ENCODE measurements at regions of chr5 and their contacts with region 1.

Region 1: GRCh38 chr5:178153573-178154343 is at the start of gene NHP2:
- DNase-seq: peak; percentile 95
- ATAC-seq: peak; percentile 99
- H3K4me3 Mint-ChIP-seq: peak within 1 kb of the TSS; percentile 96
- H3K27ac Mint-ChIP-seq: peak within 1 kb of the TSS; percentile 83
- H3K4me1 Mint-ChIP-seq: peaks cover 37% of the 10 kb centered on the region
- H3K27me3 Mint-ChIP-seq: no peaks in the 10 kb centered on the region
- CTCF ChIP-seq: no peak
- total RNA-seq, gene NHP2: 175 and 180 TPM in 2 replicates

Region 2: DNA sequence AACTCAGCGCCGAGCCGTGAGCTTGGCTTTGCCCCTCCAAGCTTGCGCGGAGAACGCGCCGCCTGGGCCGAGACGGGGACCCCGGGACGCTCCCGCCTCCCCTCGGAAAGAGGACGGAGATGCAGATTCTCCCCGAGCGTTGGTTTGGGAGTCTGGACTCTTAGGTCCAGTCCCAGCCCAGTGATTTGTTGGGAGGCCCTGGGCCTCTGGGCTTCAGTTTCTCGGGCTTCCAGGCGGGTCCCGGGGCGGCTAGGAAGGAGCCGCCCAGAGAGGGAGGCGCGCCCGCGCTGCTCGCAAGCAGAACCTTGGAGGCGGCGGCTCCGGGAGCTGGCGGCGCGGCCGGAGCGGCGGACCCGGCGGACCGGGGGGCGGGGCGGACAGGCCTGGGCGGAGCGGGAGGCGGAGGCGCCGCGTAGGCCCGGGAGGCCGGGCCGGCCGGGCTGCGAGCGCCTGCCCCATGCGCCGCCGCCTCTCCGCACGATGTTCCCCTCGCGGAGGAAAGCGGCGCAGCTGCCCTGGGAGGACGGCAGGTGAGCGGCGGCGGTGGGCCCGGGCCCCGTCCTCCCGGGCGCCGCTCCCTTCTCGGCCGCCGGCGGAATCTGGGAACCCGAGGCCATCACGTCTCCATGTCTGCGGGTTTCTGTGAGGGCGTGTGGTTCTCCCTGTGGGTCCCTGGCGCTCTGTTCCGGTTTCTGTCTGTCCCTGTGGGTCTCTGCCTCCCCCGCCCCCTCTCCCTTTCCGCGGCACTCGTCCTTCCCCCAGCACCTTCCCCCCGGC is 553.8 kb before region 1 on chr5 and contains the start of gene B4GALT7:
- CTCF ChIA-PET with region 1: no interaction called
- POLR2A ChIA-PET with region 1: no interaction called
- intact Hi-C with region 1: loop called (anchors 10 kb)
- DNase-seq: peak; percentile 75
- ATAC-seq: peak; percentile 89
- H3K4me3 Mint-ChIP-seq: peak within 1 kb of the TSS; percentile 91
- H3K27ac Mint-ChIP-seq: peak within 1 kb of the TSS; percentile 93
- H3K4me1 Mint-ChIP-seq: peaks cover 28% of the 10 kb centered on the region
- H3K27me3 Mint-ChIP-seq: no peaks in the 10 kb centered on the region
- CTCF ChIP-seq: no peak
- total RNA-seq, gene B4GALT7: 36.3 and 42.3 TPM in 2 replicates

Region 3: GRCh38 chr5:177958696-177959095 is 195.1 kb before region 1 on chr5:
- CTCF ChIA-PET with region 1: no interaction called
- POLR2A ChIA-PET with region 1: no interaction called
- intact Hi-C with region 1: no loop called
- DNase-seq: no peak
- ATAC-seq: no peak
- H3K4me3 Mint-ChIP-seq: no peak overlapping the region
- H3K27ac Mint-ChIP-seq: no peak overlapping the region
- H3K4me1 Mint-ChIP-seq: no peaks in the 10 kb centered on the region
- H3K27me3 Mint-ChIP-seq: no peaks in the 10 kb centered on the region
- CTCF ChIP-seq: no peak

Region 4: DNA sequence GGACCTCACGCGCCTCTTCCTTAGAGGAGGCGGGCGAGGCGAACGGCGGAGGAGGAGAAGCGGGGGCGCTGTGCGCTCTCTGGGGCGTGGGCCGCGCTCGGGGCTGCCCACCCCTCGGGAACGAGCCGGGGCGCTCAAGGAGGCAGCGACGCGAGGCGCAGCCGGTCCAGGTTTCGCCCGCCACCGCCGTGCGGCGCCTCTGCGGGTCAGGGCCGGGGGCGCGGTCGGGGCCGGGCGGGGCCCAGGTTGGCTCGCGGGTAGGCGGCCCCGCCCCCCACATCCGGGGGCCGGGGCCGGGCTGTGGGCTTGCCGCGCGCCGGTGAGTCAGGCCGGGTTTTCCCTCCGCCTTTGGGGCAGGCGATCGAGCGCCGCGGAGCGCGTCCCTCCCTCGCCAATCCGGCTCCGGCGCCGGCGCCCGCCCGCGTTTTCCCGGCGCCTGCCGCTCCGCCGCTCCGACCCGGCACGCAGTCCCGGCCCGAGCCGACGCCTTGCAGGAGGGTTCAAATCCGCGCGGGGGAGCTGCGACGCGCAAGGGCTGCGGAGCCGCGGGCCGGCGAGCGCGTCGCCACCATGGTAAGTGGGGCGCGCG is 40.5 kb before region 1 on chr5 and contains the start of gene N4BP3:
- CTCF ChIA-PET with region 1: no interaction called
- POLR2A ChIA-PET with region 1: interaction called, 10 read pairs
- intact Hi-C with region 1: loop called (anchors 1 kb)
- DNase-seq: peak; percentile 92
- ATAC-seq: peak; percentile 70
- H3K4me3 Mint-ChIP-seq: peak within 1 kb of the TSS; percentile 98
- H3K27ac Mint-ChIP-seq: peak within 1 kb of the TSS; percentile 94
- H3K4me1 Mint-ChIP-seq: peaks cover 65% of the 10 kb centered on the region
- H3K27me3 Mint-ChIP-seq: no peaks in the 10 kb centered on the region
- CTCF ChIP-seq: no peak
- total RNA-seq, gene N4BP3: 17.4 and 18.1 TPM in 2 replicates

Region 5: GRCh38 chr5:178130604-178131485 is 22.9 kb before region 1 on chr5 and contains the start of gene RMND5B:
- CTCF ChIA-PET with region 1: no interaction called
- POLR2A ChIA-PET with region 1: interaction called, 10 read pairs
- intact Hi-C with region 1: loop called (anchors 1 kb)
- DNase-seq: peak; percentile 86
- ATAC-seq: peak; percentile 89
- H3K4me3 Mint-ChIP-seq: peak within 1 kb of the TSS; percentile 85
- H3K27ac Mint-ChIP-seq: peak within 1 kb of the TSS; percentile 74
- H3K4me1 Mint-ChIP-seq: peaks cover 21% of the 10 kb centered on the region
- H3K27me3 Mint-ChIP-seq: no peaks in the 10 kb centered on the region
- CTCF ChIP-seq: no peak
- total RNA-seq, gene RMND5B: 42.4 and 57.2 TPM in 2 replicates